ENCODE measurements at regions of chr1 and their contacts with region 1.

Region 1: GRCh38 chr1:179002552-179003345 is 22.9 kb upstream of the FAM20B start:
- DNase-seq: peak; percentile 87
- H3K4me3 ChIP-seq: peak overlapping the region in 2 of 4 donors; percentile 14 to 24
- H3K27ac ChIP-seq: no peak overlapping the region
- H3K4me1 ChIP-seq: peaks cover 0 to 26% (median 11%) of the 10 kb centered on the region in 4 donors
- H3K27me3 ChIP-seq: no peaks in the 10 kb centered on the region
- CTCF ChIP-seq: peak; percentile 93 to 99 (median 96)
- EP300 ChIP-seq: no peak
- POLR2A ChIP-seq: no peak

Region 2: DNA sequence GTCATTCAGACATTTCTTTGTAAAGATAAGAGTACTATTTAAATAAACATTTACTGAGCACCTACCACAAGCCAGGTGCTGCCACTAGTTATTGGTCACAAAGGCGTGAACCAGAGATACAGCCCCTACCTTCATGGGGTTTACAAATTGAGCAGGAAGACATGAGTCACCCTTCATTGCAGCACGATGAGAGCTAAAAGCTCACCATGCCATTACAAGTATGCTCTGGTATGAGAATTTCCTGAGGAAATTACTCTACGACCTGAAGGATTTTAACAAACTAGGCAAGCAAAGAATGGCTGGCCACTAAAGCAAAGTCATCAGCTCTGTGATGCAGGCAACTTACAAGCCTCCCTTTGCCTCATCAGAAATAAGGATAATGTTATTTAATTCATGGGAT is 1485.2 kb before region 1 on chr1:
- intact Hi-C with region 1: no loop called
- DNase-seq: no peak
- H3K4me3 ChIP-seq: no peak overlapping the region
- H3K27ac ChIP-seq: no peak overlapping the region
- H3K4me1 ChIP-seq: no peaks in the 10 kb centered on the region
- H3K27me3 ChIP-seq: no peaks in the 10 kb centered on the region
- CTCF ChIP-seq: no peak
- EP300 ChIP-seq: no peak
- POLR2A ChIP-seq: no peak

Region 3: GRCh38 chr1:178542560-178543356 is 460.0 kb before region 1 on chr1:
- intact Hi-C with region 1: loop called (anchors 2 kb)
- DNase-seq: peak; percentile 94
- H3K4me3 ChIP-seq: peak overlapping the region; percentile 63 to 90 (median 66)
- H3K27ac ChIP-seq: peak overlapping the region; percentile 81 to 87 (median 82)
- H3K4me1 ChIP-seq: peaks cover 0 to 43% (median 35%) of the 10 kb centered on the region in 4 donors
- H3K27me3 ChIP-seq: no peaks in the 10 kb centered on the region
- CTCF ChIP-seq: peak; percentile 97 to 99 (median 98)
- EP300 ChIP-seq: peak in 1 of 4 donors; percentile 25
- POLR2A ChIP-seq: no peak

Region 4: GRCh38 chr1:178774263-178774662 is 228.5 kb before region 1 on chr1:
- intact Hi-C with region 1: loop called (anchors 1 kb)
- DNase-seq: no peak
- H3K4me3 ChIP-seq: no peak overlapping the region
- H3K27ac ChIP-seq: no peak overlapping the region
- H3K4me1 ChIP-seq: no peaks in the 10 kb centered on the region
- H3K27me3 ChIP-seq: no peaks in the 10 kb centered on the region
- CTCF ChIP-seq: peak in 2 of 4 experiments; percentile 32 to 34
- EP300 ChIP-seq: no peak
- POLR2A ChIP-seq: no peak

Region 5: DNA sequence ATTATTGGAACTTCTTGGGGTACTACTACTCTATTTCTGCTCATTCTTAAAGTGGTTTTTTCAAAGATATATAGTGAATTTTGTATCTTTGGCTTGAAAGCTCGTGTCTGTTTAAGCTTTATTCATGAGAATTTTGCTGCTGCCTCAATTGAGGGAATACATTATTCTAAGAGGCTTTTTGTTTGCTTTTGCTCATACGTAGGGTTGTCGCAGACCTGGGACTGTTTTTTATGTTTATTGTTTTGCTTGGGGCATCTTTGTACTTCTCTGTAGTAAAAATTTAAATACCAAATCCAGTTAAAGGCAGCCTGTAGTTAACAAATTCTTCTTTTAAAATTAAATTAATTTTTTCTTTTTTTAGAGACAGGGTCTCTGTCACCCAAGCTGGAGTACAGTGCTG is 194.2 kb before region 1 on chr1:
- intact Hi-C with region 1: loop called (anchors 1 kb)
- DNase-seq: no peak
- H3K4me3 ChIP-seq: no peak overlapping the region
- H3K27ac ChIP-seq: no peak overlapping the region
- H3K4me1 ChIP-seq: peaks cover 0 to 5% (median 2%) of the 10 kb centered on the region in 4 donors
- H3K27me3 ChIP-seq: no peaks in the 10 kb centered on the region
- CTCF ChIP-seq: no peak
- EP300 ChIP-seq: no peak
- POLR2A ChIP-seq: no peak

Region 6: GRCh38 chr1:178870944-178871343 is 131.8 kb before region 1 on chr1 and contains the start of gene ANGPTL1:
- intact Hi-C with region 1: loop called (anchors 5 kb)
- DNase-seq: no peak
- H3K4me3 ChIP-seq: peak within 1 kb of the TSS; percentile 35 to 56 (median 50)
- H3K27ac ChIP-seq: peak within 1 kb of the TSS; percentile 74 to 80 (median 77)
- H3K4me1 ChIP-seq: peaks cover 0 to 33% (median 30%) of the 10 kb centered on the region in 4 donors
- H3K27me3 ChIP-seq: no peaks in the 10 kb centered on the region
- CTCF ChIP-seq: peak in 1 of 4 experiments; percentile 10
- EP300 ChIP-seq: no peak
- POLR2A ChIP-seq: no peak
- total RNA-seq, gene ANGPTL1: 117 to 173 (median 140) TPM

Region 7: GRCh38 chr1:178953034-178953433 is 49.7 kb before region 1 on chr1:
- intact Hi-C with region 1: loop called (anchors 5 kb)
- DNase-seq: peak; percentile 88
- H3K4me3 ChIP-seq: no peak overlapping the region
- H3K27ac ChIP-seq: peak overlapping the region; percentile 58 to 74 (median 72)
- H3K4me1 ChIP-seq: peaks cover 0 to 57% (median 51%) of the 10 kb centered on the region in 4 donors
- H3K27me3 ChIP-seq: no peaks in the 10 kb centered on the region
- CTCF ChIP-seq: no peak
- EP300 ChIP-seq: no peak
- POLR2A ChIP-seq: no peak

Measured in sigmoid colon (tissue), 7 donors.